Activated CD4-positive, alpha-beta T cell treated with anti-CD3 and anti-CD28 coated beads for 36 hours (primary cell): ENCODE measurements at regions of chr1 and their contacts with region 1.

Region 1: DNA sequence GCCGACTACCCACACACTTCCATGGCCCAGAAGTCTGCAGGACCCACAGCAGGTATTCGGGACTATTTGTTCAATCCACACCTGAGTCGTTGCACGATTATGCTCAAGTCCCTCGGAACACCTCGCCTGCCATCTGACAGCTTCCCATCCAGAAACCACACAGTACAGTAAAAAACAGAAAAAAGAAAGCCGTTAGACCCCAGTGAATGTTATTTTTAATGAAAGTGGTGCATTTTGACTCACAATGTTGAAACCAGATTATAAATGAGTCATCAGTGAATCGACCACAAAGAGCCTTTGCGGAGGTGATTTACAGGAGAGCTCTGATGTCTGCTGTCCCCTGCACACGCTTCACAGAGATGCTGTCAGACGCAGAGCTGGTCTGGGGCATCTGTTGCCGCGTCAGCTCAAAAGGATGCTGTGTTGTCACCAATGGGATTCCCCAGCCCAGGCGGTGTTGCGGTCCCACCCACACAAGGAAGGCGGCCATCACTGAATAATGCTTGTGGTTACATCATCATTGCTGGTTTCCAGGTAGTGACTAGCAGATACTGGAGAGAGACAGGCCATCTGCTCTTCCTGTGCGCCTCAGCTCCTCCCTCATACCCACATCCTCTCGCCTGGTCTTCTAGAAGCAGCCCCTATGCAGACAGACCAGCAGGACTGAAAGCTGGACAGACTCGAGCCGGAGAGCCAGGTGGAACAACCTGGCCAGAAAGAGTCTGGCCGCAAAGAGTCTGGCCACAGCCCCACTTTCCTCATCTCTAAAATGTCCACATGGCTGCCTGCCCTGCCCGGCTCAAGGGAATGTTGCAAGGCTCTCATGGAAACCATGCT is 116.8 kb downstream of the TOMM20 start:
- DNase-seq: peak; percentile 98
- ATAC-seq: peak; percentile 80
- H3K4me3 Mint-ChIP-seq: peak overlapping the region; percentile 52
- H3K27ac Mint-ChIP-seq: peak overlapping the region; percentile 93
- H3K4me1 Mint-ChIP-seq: peaks cover 91% of the 10 kb centered on the region
- H3K27me3 Mint-ChIP-seq: no peaks in the 10 kb centered on the region

Region 2: GRCh38 chr1:234486498-234487448 is 525.0 kb before region 1 on chr1:
- CTCF ChIA-PET with region 1: interaction called, 4 read pairs
- POLR2A ChIA-PET with region 1: no interaction called
- intact Hi-C with region 1: loop called (anchors 1 to 2 kb)
- DNase-seq: peak; percentile 61
- ATAC-seq: peak; percentile 16
- H3K4me3 Mint-ChIP-seq: no peak overlapping the region
- H3K27ac Mint-ChIP-seq: peak overlapping the region; percentile 98
- H3K4me1 Mint-ChIP-seq: peaks cover 43% of the 10 kb centered on the region
- H3K27me3 Mint-ChIP-seq: peaks cover 16% of the 10 kb centered on the region

Region 3: DNA sequence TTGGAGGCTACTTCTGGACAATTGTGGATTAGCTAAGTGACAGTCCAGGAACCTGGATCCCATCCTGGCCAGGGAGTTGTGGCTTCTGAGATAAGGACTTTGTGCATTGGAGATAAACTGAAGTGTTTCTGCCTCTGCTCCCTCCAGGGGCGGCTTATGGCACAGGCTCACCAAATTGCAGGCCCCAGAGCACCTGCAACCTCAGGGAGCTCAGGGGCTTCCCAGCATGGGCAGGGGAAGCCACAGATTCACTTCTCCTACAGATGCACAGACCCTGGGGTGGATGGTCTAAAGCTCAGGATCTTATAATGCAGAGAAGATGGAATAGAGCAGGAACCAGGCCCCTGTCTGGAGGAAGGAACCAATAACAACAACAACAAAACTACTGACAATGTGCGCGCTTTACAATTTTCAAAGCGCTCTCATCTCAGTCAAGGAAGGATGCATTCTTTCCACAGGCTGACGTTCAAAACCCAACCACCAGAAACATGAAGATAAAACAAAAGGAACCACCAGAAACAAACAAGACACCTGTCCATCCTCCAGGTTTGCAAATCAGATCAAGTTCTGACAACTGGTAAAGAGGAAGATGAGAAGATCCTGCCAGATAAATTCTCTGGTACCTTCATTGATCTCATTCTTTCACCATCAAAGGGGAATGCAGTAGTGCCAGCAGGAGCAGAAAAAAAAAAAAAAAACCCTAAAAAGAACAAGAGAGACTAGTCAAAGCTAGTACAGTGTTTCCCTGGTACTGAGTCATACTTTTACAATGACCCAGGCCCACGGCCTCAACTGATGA is 280.8 kb before region 1 on chr1:
- CTCF ChIA-PET with region 1: interaction called, 3 read pairs
- POLR2A ChIA-PET with region 1: interaction called, 3 read pairs
- intact Hi-C with region 1: loop called (anchors 1 kb)
- DNase-seq: peak; percentile 77
- ATAC-seq: peak; percentile 87
- H3K4me3 Mint-ChIP-seq: peak overlapping the region; percentile 32
- H3K27ac Mint-ChIP-seq: peak overlapping the region; percentile 92
- H3K4me1 Mint-ChIP-seq: peaks cover 71% of the 10 kb centered on the region
- H3K27me3 Mint-ChIP-seq: no peaks in the 10 kb centered on the region

Region 4: GRCh38 chr1:234842726-234843641 is 168.8 kb before region 1 on chr1:
- CTCF ChIA-PET with region 1: no interaction called
- POLR2A ChIA-PET with region 1: interaction called, 9 read pairs
- intact Hi-C with region 1: loop called (anchors 1 kb)
- DNase-seq: peak; percentile 93
- ATAC-seq: peak; percentile 83
- H3K4me3 Mint-ChIP-seq: peak overlapping the region; percentile 63
- H3K27ac Mint-ChIP-seq: peak overlapping the region; percentile 94
- H3K4me1 Mint-ChIP-seq: peaks cover 85% of the 10 kb centered on the region
- H3K27me3 Mint-ChIP-seq: no peaks in the 10 kb centered on the region

Region 5: GRCh38 chr1:234963180-234963903 is 48.5 kb before region 1 on chr1:
- CTCF ChIA-PET with region 1: no interaction called
- POLR2A ChIA-PET with region 1: interaction called, 6 read pairs
- intact Hi-C with region 1: loop called (anchors 1 kb)
- DNase-seq: peak; percentile 96
- ATAC-seq: peak; percentile 81
- H3K4me3 Mint-ChIP-seq: peak overlapping the region; percentile 45
- H3K27ac Mint-ChIP-seq: peak overlapping the region; percentile 96
- H3K4me1 Mint-ChIP-seq: peaks cover 76% of the 10 kb centered on the region
- H3K27me3 Mint-ChIP-seq: no peaks in the 10 kb centered on the region

Region 6: DNA sequence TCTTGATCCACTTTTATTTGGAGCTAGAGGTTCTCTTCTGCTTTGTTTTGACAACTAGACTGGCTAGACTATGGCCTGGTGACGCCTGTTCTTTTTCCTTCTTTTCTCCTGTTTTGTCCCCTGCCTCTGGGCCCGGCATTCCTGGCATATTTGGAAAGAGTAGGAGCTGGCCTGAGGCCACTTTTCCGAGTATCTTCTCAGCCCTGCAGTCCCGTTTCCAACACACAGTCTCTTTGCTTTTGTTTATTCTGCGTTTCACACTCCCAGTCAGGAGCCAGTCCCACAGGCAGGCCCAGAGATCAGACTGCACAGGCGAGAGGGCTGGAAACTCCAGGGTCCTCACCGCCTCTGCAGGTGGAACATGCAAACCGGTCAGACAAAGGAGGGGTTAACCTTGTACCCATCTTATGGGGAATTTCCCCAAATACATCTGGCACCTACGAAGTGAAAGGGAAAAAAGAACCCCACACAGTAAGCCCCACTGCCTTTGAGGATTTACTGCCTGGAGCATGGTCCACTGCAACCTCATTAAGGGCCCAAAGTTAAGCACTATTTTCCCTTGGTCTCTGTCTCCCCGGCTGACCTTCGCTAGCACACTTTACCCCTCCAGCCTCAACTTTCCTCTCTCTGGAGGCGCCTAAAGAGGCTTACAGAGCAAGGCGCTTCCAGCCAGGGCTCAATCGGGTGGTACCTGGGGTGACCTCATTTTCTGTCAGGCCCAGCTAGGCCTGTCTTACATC is 24.2 kb before region 1 on chr1:
- CTCF ChIA-PET with region 1: interaction called, 3 read pairs
- POLR2A ChIA-PET with region 1: interaction called, 6 read pairs
- intact Hi-C with region 1: loop called in 1 of 2 experiments (anchors 1 kb)
- DNase-seq: no peak
- ATAC-seq: peak; percentile 11
- H3K4me3 Mint-ChIP-seq: peak overlapping the region; percentile 5
- H3K27ac Mint-ChIP-seq: peak overlapping the region; percentile 86
- H3K4me1 Mint-ChIP-seq: peaks cover 67% of the 10 kb centered on the region
- H3K27me3 Mint-ChIP-seq: no peaks in the 10 kb centered on the region

Region 7: DNA sequence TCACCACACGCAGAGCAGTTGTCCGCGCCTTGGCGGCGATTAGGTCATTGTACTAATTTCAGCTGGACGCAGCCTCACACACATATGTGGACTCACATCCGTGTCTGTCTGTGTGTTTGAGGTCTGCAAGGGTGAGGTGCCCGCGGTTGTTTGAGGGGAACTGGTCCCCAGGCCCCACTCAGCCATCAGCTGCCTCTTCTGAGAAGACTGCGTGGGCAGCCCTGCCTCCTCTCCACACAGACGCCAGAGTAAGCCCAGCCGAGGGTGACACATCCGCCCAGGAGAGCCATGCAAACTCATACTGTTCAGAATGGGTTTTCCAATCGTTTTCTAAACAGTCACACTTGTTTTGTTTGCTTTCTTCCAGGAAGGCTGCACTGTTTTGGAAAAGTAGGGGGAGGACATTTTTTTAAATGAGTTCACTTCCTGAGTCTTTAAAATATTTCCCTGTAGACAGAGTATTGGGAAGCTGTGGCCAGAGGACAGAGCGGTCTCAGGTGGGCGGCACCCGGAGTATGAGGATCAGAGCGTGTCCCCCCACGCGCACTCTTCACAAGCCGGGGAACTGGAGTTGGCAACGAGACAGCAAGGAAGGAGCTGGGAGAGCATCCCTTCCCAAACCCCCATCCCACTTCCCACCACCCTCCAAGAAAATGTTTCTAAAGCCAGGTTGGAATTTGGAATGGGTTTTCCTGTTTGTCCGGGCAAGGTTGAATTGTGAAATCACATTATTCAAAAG is 63.5 kb after region 1 on chr1:
- CTCF ChIA-PET with region 1: interaction called, 3 read pairs
- POLR2A ChIA-PET with region 1: interaction called, 9 read pairs
- intact Hi-C with region 1: loop called (anchors 1 kb)
- DNase-seq: peak; percentile 86
- ATAC-seq: peak; percentile 64
- H3K4me3 Mint-ChIP-seq: peak overlapping the region; percentile 41
- H3K27ac Mint-ChIP-seq: peak overlapping the region; percentile 98
- H3K4me1 Mint-ChIP-seq: peaks cover 28% of the 10 kb centered on the region
- H3K27me3 Mint-ChIP-seq: no peaks in the 10 kb centered on the region